Panc1 (cell line): ENCODE measurements at regions of chr7 and their contacts with region 1.

Region 1: DNA sequence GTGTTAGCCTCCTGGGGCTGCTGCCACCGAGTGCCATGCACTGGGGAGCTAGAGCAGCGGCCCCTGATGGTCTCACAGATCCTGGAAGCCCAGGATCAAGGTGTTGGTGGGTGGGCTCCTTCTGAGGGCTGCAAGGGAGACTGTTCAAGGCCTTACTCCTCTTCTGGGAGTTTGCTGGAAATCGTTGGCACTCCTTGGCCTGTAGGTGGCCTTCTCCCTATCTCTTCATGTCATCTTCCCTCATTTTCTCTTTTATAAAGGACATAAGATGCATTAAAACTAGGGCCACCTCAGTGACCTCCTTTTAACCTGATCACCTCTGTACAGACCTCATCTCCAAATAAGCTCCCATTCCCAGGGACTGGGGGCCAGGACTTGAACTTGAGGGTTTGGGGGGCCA is 27.0 kb upstream of the ZNF862 start:
- DNase-seq: no peak
- ATAC-seq: no peak
- H3K4me3 ChIP-seq: no peak overlapping the region
- H3K27ac ChIP-seq: no peak overlapping the region
- H3K4me1 ChIP-seq: no peaks in the 10 kb centered on the region; the same call in 1 of the 2 replicates
- H3K27me3 ChIP-seq: no peaks in the 10 kb centered on the region
- CTCF ChIP-seq: peak; percentile 65; the same call in 1 of the 2 replicates

Region 2: GRCh38 chr7:149524394-149524793 is 286.8 kb before region 1 on chr7:
- CTCF ChIA-PET with region 1: no interaction called
- POLR2A ChIA-PET with region 1: no interaction called
- in situ Hi-C with region 1: no loop called
- intact Hi-C with region 1: no loop called
- DNase-seq: no peak
- ATAC-seq: no peak
- H3K4me3 ChIP-seq: no peak overlapping the region
- H3K27ac ChIP-seq: no peak overlapping the region
- H3K4me1 ChIP-seq: no peaks in the 10 kb centered on the region
- H3K27me3 ChIP-seq: no peaks in the 10 kb centered on the region
- CTCF ChIP-seq: no peak

Region 3: DNA sequence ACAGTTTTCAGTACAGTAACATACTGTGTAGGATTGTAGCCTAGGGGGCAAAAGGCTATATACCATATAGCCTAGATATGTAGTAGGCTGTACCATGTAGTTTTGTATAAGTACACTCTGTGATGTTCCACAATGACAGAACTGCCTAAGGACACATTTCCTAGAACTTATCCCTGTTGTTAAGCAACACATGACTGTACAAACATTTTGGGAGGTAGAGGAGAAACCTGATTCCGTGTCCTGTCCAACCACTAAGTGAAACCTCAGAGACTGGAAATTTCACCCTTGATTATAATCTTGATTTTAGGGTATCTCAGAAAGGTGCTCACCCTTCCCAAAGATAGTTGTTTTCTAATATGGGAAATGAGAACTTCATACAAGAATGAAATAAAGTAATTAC is 29.5 kb after region 1 on chr7:
- CTCF ChIA-PET with region 1: no interaction called
- POLR2A ChIA-PET with region 1: interaction called, 12 read pairs
- in situ Hi-C with region 1: no loop called
- intact Hi-C with region 1: no loop called
- DNase-seq: no peak
- ATAC-seq: no peak
- H3K4me3 ChIP-seq: no peak overlapping the region
- H3K27ac ChIP-seq: no peak overlapping the region
- H3K4me1 ChIP-seq: peaks cover 11% of the 10 kb centered on the region; the same call in 1 of the 2 replicates
- H3K27me3 ChIP-seq: no peaks in the 10 kb centered on the region
- CTCF ChIP-seq: no peak

Region 4: DNA sequence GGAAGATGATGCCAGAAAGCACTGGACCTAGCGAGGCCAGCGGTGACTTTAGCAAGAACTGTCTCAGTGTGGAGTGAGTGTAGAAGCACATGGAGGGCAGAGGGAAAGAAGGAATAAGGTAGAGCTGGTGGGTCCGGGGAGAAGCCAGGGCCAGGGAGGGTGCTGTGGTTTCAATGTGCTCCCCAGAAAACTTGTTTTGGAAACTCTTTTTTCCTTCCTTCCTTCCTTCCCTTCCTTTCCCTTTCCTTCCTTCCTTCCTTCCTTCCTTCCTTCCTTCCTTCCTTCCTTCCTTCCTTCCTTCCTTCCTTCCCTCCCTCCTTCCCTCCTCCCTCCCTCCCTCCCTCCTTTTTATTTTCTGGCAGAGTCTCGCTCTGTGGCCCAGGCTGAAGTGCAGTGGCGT is 535.7 kb after region 1 on chr7:
- CTCF ChIA-PET with region 1: no interaction called
- POLR2A ChIA-PET with region 1: interaction called, 22 read pairs
- in situ Hi-C with region 1: no loop called
- intact Hi-C with region 1: no loop called
- DNase-seq: no peak
- ATAC-seq: no peak; the same call in 1 of the 2 replicates
- H3K4me3 ChIP-seq: no peak overlapping the region
- H3K27ac ChIP-seq: no peak overlapping the region
- H3K4me1 ChIP-seq: 0 out of 2 replicates have a peak, but pooled peaks cover 5% of the 10 kb centered on the region
- H3K27me3 ChIP-seq: no peaks in the 10 kb centered on the region
- CTCF ChIP-seq: no peak